ENCODE measurements at regions of chr11 and their contacts with region 1.

Region 1: GRCh38 chr11:7513234-7514098 is at the start of gene PPFIBP2:
- DNase-seq: peak; percentile 74 to 86
- H3K4me3 ChIP-seq: peak within 1 kb of the TSS; percentile 59 to 63
- H3K27ac ChIP-seq: peak within 1 kb of the TSS; percentile 83 to 89
- H3K4me1 ChIP-seq: no peaks in the 10 kb centered on the region
- H3K27me3 ChIP-seq: no peaks in the 10 kb centered on the region
- CTCF ChIP-seq: peak; percentile 54 to 63 (median 57)
- POLR2A ChIP-seq: peak; percentile 38 to 54
- total RNA-seq, gene PPFIBP2: 2.1 to 36.2 (median 15.2) TPM

Region 2: DNA sequence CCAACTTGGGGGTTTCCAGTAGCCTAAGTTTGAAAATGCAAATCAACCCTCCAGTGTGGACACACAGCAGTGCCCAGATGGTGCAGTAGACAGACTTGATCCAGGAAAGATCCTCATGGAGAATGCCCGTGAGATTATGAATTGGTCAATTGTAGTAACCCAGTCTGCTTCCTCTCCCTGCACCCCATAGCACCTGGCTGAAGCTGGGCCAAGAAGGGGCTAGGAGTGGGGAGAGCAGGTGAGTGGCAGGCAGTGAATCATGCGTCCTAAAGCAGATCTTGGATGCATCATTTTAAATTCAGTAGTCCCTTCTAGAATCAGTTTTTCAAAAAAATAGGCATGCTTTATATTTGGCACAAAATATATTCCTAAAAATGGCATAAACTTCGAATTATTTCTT is 107.6 kb after region 1 on chr11:
- intact Hi-C with region 1: no loop called
- DNase-seq: no peak
- H3K4me3 ChIP-seq: no peak overlapping the region
- H3K27ac ChIP-seq: no peak overlapping the region
- H3K4me1 ChIP-seq: no peaks in the 10 kb centered on the region
- H3K27me3 ChIP-seq: no peaks in the 10 kb centered on the region
- CTCF ChIP-seq: no peak
- POLR2A ChIP-seq: no peak

Region 3: DNA sequence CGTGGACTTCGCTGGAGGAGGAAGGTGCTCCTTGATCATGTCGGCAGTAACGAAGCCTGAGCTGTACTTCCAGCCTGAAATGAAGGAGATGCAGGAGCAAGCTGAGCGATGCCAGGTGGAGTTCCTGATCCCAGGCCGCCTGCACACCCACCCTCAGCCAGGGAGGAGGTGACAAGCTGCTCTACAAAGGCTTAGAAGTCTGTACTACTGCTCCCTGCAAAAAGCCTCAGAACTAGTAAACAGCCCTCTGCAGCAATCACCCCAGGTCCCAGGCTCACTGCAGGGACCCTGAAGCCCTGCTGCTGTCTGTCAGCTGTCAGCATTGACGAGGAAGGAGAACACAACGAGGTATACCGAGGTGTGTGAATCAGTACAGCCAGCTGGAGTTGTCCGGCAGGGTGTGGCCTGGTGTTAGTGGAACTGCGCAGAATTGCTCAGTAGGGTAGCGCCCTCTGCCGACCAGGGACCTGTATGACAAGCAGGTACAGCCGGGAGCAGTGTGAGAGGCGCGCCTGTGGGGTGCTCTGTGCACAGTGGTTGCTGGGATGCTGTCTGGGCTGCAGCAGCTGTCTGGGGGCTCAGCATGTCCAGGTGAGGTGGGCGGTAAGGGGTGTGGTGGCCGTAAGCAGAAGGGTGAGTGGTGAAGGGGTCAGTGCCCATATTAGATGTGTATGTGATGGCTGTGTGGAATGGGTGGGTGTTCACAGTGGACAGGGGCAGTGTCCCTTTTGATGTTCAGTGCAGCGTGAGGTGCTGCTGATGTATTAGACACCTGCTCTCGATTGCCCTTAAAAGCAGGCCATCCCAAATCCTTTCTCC is 152.2 kb after region 1 on chr11:
- intact Hi-C with region 1: loop called (anchors 10 kb)
- DNase-seq: peak; percentile 76 to 82
- H3K4me3 ChIP-seq: no peak overlapping the region
- H3K27ac ChIP-seq: no peak overlapping the region
- H3K4me1 ChIP-seq: no peaks in the 10 kb centered on the region
- H3K27me3 ChIP-seq: no peaks in the 10 kb centered on the region
- CTCF ChIP-seq: peak; percentile 71 to 82 (median 81)
- POLR2A ChIP-seq: no peak